Activated CD4-positive, alpha-beta memory T cell treated with anti-CD3 and anti-CD28 coated beads for 36 hours (primary cell): ENCODE measurements at regions of chr17 and their contacts with region 1.

Region 1: GRCh38 chr17:75896415-75897159 is at the start of gene TRIM65:
- DNase-seq: peak; percentile 87
- H3K4me3 Mint-ChIP-seq: peak within 1 kb of the TSS; percentile 84
- H3K27ac Mint-ChIP-seq: peak within 1 kb of the TSS; percentile 72
- H3K4me1 Mint-ChIP-seq: peaks cover 24% of the 10 kb centered on the region
- H3K27me3 Mint-ChIP-seq: no peaks in the 10 kb centered on the region
- total RNA-seq, gene TRIM65: 27.5 to 28.2 TPM

Region 2: DNA sequence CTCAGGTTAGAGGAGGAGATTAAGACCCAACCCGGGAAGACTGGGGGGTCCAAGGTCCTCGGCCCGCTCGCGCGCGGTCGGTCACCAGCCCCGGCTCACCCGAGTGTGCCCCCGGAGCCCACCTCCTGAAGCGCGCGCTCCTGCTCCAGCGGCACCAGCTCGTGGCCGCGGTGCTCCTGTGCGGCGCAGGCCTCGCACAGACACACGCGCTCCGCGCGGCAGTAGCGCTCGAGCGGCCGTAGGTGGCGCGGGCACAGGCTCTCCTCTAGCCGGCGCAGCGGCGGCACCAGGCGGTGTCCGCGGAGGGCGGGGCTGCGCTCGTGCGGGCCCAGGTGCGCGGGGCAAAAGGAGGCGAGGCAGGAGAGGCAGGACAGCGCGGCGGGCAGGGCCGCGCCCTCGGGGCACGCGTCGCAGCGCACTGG is 18.8 kb before region 1 on chr17:
- CTCF ChIA-PET with region 1: interaction called, 14 read pairs
- POLR2A ChIA-PET with region 1: interaction called, 13 read pairs
- intact Hi-C with region 1: loop called (anchors 2 kb)
- DNase-seq: peak; percentile 81
- H3K4me3 Mint-ChIP-seq: peak overlapping the region; percentile 89
- H3K27ac Mint-ChIP-seq: peak overlapping the region; percentile 92
- H3K4me1 Mint-ChIP-seq: peaks cover 33% of the 10 kb centered on the region
- H3K27me3 Mint-ChIP-seq: no peaks in the 10 kb centered on the region

Region 3: GRCh38 chr17:76048025-76048605 is 151.5 kb after region 1 on chr17:
- CTCF ChIA-PET with region 1: no interaction called
- POLR2A ChIA-PET with region 1: no interaction called
- intact Hi-C with region 1: no loop called
- DNase-seq: no peak
- H3K4me3 Mint-ChIP-seq: no peak overlapping the region
- H3K27ac Mint-ChIP-seq: no peak overlapping the region
- H3K4me1 Mint-ChIP-seq: peaks cover 25% of the 10 kb centered on the region
- H3K27me3 Mint-ChIP-seq: no peaks in the 10 kb centered on the region

Region 4: GRCh38 chr17:76204277-76204676 is 307.7 kb after region 1 on chr17:
- CTCF ChIA-PET with region 1: no interaction called
- POLR2A ChIA-PET with region 1: no interaction called
- intact Hi-C with region 1: no loop called
- DNase-seq: no peak
- H3K4me3 Mint-ChIP-seq: no peak overlapping the region
- H3K27ac Mint-ChIP-seq: peak overlapping the region; percentile 35
- H3K4me1 Mint-ChIP-seq: peaks cover 46% of the 10 kb centered on the region
- H3K27me3 Mint-ChIP-seq: no peaks in the 10 kb centered on the region